Ascending aorta (tissue), 2 donors: ENCODE measurements at regions of chr1 and their contacts with region 1.

Region 1: DNA sequence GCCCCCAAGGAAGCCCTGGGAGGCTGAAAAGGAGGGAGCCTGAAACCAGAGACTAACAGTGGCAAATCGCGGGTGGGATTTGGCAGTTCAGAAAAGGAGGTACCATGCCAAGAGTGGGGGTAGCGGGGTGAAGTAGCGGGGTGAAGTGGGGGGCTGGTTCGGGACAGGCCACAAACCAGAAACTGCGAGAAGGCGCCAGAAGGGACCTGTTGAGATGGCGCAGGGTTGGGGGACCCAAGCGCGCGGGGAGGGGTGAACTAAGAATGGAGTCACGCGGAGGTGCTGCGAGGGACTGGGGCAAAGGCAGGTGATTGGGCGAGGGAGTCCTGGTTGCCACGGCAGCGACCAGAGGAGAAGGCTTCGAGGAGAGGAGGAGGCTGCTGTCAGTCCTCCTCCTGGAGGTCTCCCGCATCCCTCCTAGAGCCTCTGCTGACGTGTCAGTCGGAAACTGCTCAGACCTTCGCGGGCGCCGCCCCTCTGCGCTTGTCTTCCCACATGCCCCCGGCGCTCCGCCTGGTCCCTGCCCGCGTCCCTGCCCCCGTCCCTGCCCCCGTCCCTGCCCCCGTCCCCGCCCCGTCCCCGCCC is 438 bp upstream of the MIA3 start:
- DNase-seq: peak; percentile 84 to 97
- H3K4me3 ChIP-seq: peak overlapping the region; percentile 62 to 68
- H3K27ac ChIP-seq: peak overlapping the region; percentile 43 to 78
- H3K4me1 ChIP-seq: no peaks in the 10 kb centered on the region
- H3K27me3 ChIP-seq: no peaks in the 10 kb centered on the region
- CTCF ChIP-seq: no peak

Region 2: GRCh38 chr1:222347627-222348026 is 269.8 kb before region 1 on chr1:
- intact Hi-C with region 1: no loop called
- DNase-seq: no peak
- H3K4me3 ChIP-seq: no peak overlapping the region
- H3K27ac ChIP-seq: no peak overlapping the region
- H3K4me1 ChIP-seq: no peaks in the 10 kb centered on the region
- H3K27me3 ChIP-seq: no peaks in the 10 kb centered on the region
- CTCF ChIP-seq: no peak

Region 3: GRCh38 chr1:222643938-222644635 is 26.6 kb after region 1 on chr1:
- intact Hi-C with region 1: loop called (anchors 2 kb)
- DNase-seq: peak; percentile 97 to 99
- H3K4me3 ChIP-seq: peak overlapping the region; percentile 83
- H3K27ac ChIP-seq: peak overlapping the region; percentile 89 to 98
- H3K4me1 ChIP-seq: peaks cover 0 to 11% of the 10 kb centered on the region in 2 donors
- H3K27me3 ChIP-seq: no peaks in the 10 kb centered on the region
- CTCF ChIP-seq: no peak